Activated CD4-positive, alpha-beta T cell treated with anti-CD3 and anti-CD28 coated beads for 36 hours (primary cell): ENCODE measurements at regions of chr5 and their contacts with region 1.

Region 1: GRCh38 chr5:151126199-151126645 is 31.4 kb downstream of the ANXA6 start:
- DNase-seq: peak; percentile 81
- ATAC-seq: peak; percentile 44
- H3K4me3 Mint-ChIP-seq: no peak overlapping the region
- H3K27ac Mint-ChIP-seq: peak overlapping the region; percentile 62
- H3K4me1 Mint-ChIP-seq: peaks cover 75% of the 10 kb centered on the region
- H3K27me3 Mint-ChIP-seq: no peaks in the 10 kb centered on the region

Region 2: DNA sequence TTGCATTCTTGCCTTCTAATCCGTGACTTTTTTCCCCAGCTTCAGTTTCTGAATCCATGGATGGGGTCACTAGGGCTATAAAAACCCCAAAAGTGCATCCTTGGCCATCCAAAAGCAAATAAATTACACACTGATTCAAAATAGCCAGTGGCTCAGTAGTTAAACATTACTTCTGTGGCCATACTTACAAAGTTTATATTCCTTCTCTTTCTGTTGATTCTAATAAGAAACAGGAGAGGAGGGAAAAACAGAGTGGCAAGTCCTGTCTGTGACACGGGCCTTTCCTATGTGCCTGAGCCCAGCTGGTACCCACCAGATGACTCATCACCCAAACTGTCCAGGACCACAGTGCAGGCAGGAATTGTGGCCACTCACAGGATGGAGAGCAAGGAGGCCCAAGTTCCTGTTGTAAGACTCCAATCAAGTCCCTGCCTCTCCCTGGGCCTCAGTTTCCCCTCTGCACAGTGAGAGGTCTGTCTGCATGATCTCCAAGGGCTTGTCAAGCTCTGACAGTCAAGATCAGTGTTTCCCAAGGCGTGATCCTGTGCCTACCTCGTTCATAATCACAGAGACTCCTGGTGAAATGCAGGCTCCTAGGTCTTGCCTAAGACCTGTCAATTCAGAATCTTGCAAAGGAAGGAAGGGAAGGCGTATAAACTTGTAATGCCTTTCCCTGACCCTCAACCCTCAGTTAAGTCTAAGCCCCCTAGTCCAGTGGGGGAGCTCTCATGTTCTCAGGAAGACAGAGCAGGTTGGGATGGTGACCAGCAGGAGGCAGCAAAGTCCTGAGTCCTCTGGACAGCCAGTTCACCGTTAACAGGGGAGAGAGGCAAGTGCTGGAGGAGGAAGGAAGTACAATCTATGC is 74.9 kb before region 1 on chr5:
- CTCF ChIA-PET with region 1: interaction called, 22 read pairs
- POLR2A ChIA-PET with region 1: interaction called, 3 read pairs
- intact Hi-C with region 1: no loop called
- DNase-seq: peak; percentile 82
- ATAC-seq: peak; percentile 84
- H3K4me3 Mint-ChIP-seq: no peak overlapping the region
- H3K27ac Mint-ChIP-seq: no peak overlapping the region
- H3K4me1 Mint-ChIP-seq: peaks cover 5% of the 10 kb centered on the region
- H3K27me3 Mint-ChIP-seq: no peaks in the 10 kb centered on the region

Region 3: GRCh38 chr5:151093476-151093889 is 32.7 kb before region 1 on chr5:
- CTCF ChIA-PET with region 1: interaction called, 14 read pairs
- POLR2A ChIA-PET with region 1: no interaction called
- intact Hi-C with region 1: no loop called
- DNase-seq: no peak
- ATAC-seq: peak; percentile 5
- H3K4me3 Mint-ChIP-seq: peak overlapping the region; percentile 54
- H3K27ac Mint-ChIP-seq: peak overlapping the region; percentile 93
- H3K4me1 Mint-ChIP-seq: peaks cover 63% of the 10 kb centered on the region
- H3K27me3 Mint-ChIP-seq: no peaks in the 10 kb centered on the region

Region 4: GRCh38 chr5:151157426-151158286 is 31.4 kb after region 1 on chr5 and contains the start of gene ANXA6:
- CTCF ChIA-PET with region 1: interaction called, 685 read pairs
- POLR2A ChIA-PET with region 1: interaction called, 3 read pairs
- intact Hi-C with region 1: no loop called
- DNase-seq: peak; percentile 80
- ATAC-seq: peak; percentile 47
- H3K4me3 Mint-ChIP-seq: peak within 1 kb of the TSS; percentile 91
- H3K27ac Mint-ChIP-seq: peak within 1 kb of the TSS; percentile 93
- H3K4me1 Mint-ChIP-seq: peaks cover 59% of the 10 kb centered on the region
- H3K27me3 Mint-ChIP-seq: no peaks in the 10 kb centered on the region
- total RNA-seq, gene ANXA6: 322 to 332 TPM

Region 5: GRCh38 chr5:151239237-151239861 is 113.1 kb after region 1 on chr5:
- CTCF ChIA-PET with region 1: interaction called, 21 read pairs
- POLR2A ChIA-PET with region 1: no interaction called
- intact Hi-C with region 1: loop called (anchors 1 kb)
- DNase-seq: peak; percentile 82
- ATAC-seq: peak; percentile 71
- H3K4me3 Mint-ChIP-seq: no peak overlapping the region
- H3K27ac Mint-ChIP-seq: no peak overlapping the region
- H3K4me1 Mint-ChIP-seq: peaks cover 29% of the 10 kb centered on the region
- H3K27me3 Mint-ChIP-seq: no peaks in the 10 kb centered on the region

Region 6: DNA sequence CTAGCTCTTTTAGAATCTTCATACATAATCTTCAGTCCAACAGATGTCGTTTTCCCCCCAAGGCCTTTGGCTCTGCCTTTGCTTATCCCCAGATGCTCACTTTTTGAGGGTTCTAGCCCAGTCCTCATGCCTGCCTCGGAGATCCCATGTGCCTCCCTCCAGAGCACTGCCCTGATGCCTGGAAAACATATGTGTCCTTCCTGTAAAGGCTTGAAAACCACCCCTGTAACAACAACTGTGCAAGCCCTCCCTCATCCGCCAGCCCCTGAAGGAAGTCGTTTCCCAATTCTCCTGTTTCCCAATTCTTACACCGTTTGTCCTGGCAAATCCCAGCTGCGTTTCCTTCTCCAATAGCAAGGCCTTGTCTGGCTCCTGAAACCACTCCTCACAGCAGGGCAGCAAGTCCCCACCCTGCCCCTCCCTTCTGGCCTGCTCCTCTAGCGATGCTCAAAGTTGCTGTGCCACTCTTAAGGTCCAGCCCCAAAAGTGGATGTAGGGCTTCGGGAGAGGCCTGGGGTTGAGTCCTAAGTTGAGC is 373.3 kb after region 1 on chr5:
- CTCF ChIA-PET with region 1: no interaction called
- POLR2A ChIA-PET with region 1: no interaction called
- intact Hi-C with region 1: loop called in 1 of 2 experiments (anchors 2 kb)
- DNase-seq: no peak
- ATAC-seq: no peak
- H3K4me3 Mint-ChIP-seq: no peak overlapping the region
- H3K27ac Mint-ChIP-seq: no peak overlapping the region
- H3K4me1 Mint-ChIP-seq: peaks cover 4% of the 10 kb centered on the region
- H3K27me3 Mint-ChIP-seq: no peaks in the 10 kb centered on the region

Region 7: DNA sequence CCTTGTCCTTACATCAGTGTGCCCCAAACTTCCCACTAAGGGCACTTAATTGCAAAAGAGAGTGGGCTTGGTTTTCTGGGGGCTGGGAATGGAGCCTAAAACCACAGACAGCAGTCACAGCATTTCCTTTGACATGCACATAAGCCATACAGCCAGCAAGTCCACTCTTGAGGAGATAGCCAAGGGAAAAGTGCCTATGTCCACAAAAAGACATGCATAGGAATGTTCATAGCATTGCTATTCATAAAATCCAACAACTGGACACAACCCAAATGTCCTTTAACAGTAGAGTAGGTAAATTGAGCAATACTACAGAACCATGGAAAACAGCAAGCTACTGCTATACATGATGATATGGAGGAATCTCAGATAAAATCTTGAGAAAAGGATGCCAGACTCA is 476.6 kb after region 1 on chr5:
- CTCF ChIA-PET with region 1: no interaction called
- POLR2A ChIA-PET with region 1: no interaction called
- intact Hi-C with region 1: no loop called
- DNase-seq: no peak
- ATAC-seq: no peak
- H3K4me3 Mint-ChIP-seq: no peak overlapping the region
- H3K27ac Mint-ChIP-seq: no peak overlapping the region
- H3K4me1 Mint-ChIP-seq: peaks cover 7% of the 10 kb centered on the region
- H3K27me3 Mint-ChIP-seq: peaks cover 2% of the 10 kb centered on the region

Region 8: DNA sequence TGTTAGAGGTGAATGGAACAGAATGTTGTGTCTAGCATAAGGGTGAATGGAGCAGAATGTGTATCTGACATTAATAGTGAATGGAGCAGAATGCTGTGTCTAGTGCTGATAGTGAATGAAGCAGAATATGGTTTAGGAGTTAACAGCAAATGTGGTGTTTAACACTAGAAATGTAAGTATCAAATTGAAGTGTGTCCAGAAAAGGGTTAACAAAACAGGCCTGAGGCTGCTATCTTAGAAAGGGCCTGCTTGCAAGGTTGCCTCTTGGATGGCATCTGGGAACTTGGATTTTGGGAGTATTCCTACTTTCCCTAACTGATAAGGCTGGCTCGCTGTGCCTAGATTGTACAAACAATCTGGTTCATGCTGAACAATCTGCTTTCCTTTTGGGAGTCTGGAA is 721.6 kb after region 1 on chr5:
- CTCF ChIA-PET with region 1: no interaction called
- POLR2A ChIA-PET with region 1: no interaction called
- intact Hi-C with region 1: no loop called
- DNase-seq: no peak
- ATAC-seq: no peak
- H3K4me3 Mint-ChIP-seq: no peak overlapping the region
- H3K27ac Mint-ChIP-seq: no peak overlapping the region
- H3K4me1 Mint-ChIP-seq: no peaks in the 10 kb centered on the region
- H3K27me3 Mint-ChIP-seq: no peaks in the 10 kb centered on the region